Caco-2 (cell line): ENCODE measurements at regions of chr3 and their contacts with region 1.

Region 1: GRCh38 chr3:41198950-41199865 is at the start of gene CTNNB1:
- DNase-seq: peak; percentile 83 to 88
- H3K4me3 ChIP-seq: peak within 1 kb of the TSS; percentile 97
- H3K4me3 Mint-ChIP-seq: peak within 1 kb of the TSS; percentile 80
- H3K27ac Mint-ChIP-seq: peak within 1 kb of the TSS; percentile 94
- H3K4me1 ChIP-seq: peaks cover 27% of the 10 kb centered on the region
- H3K4me1 Mint-ChIP-seq: peaks cover 13% of the 10 kb centered on the region
- H3K27me3 ChIP-seq: no peaks in the 10 kb centered on the region
- H3K27me3 Mint-ChIP-seq: no peaks in the 10 kb centered on the region
- CTCF ChIP-seq: no peak
- total RNA-seq, gene CTNNB1: 201 and 206 TPM in 2 replicates

Region 2: GRCh38 chr3:40317061-40317855 is 882.0 kb before region 1 on chr3:
- CTCF ChIA-PET with region 1: no interaction called
- POLR2A ChIA-PET with region 1: no interaction called
- intact Hi-C with region 1: loop called (anchors 10 kb)
- DNase-seq: peak; percentile 40 to 57
- H3K4me3 ChIP-seq: no peak overlapping the region
- H3K4me3 Mint-ChIP-seq: no peak overlapping the region
- H3K27ac Mint-ChIP-seq: no peak overlapping the region
- H3K4me1 ChIP-seq: peaks cover 11% of the 10 kb centered on the region
- H3K4me1 Mint-ChIP-seq: peaks cover 9% of the 10 kb centered on the region
- H3K27me3 ChIP-seq: no peaks in the 10 kb centered on the region
- H3K27me3 Mint-ChIP-seq: peaks cover 2% of the 10 kb centered on the region
- CTCF ChIP-seq: peak; percentile 67 to 76

Region 3: DNA sequence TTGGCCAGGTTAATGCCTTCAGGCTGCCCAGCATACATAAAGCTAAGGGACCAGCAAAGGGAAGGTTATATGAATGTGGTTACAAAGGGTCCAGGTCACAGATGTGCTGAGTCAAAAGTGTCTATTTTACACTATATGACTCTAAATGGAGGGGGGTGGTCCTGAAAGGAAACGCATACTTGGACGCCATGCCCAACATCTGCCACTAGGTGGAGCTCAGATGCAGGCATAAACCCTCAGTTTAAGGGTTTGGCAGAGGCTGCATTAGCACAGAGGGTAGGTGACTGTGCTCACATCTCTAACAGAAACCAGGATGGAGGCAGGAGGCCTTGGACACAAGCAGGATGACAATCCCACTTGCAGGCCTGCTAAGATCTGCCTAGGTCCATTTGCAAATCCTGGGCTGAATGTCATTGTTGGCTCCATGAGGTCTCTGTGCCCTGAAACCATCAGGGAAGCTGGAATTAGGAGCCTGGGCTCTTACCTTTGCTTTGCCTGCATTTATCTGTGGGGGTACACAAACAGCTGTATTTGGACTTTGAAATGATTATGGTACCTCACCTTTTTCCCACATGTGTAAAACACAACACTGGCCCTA is 618.6 kb before region 1 on chr3:
- CTCF ChIA-PET with region 1: no interaction called
- POLR2A ChIA-PET with region 1: no interaction called
- intact Hi-C with region 1: loop called (anchors 5 kb)
- DNase-seq: peak; percentile 63 to 74
- H3K4me3 ChIP-seq: no peak overlapping the region
- H3K4me3 Mint-ChIP-seq: no peak overlapping the region
- H3K27ac Mint-ChIP-seq: no peak overlapping the region
- H3K4me1 ChIP-seq: no peaks in the 10 kb centered on the region
- H3K4me1 Mint-ChIP-seq: no peaks in the 10 kb centered on the region
- H3K27me3 ChIP-seq: no peaks in the 10 kb centered on the region
- H3K27me3 Mint-ChIP-seq: peaks cover 3% of the 10 kb centered on the region
- CTCF ChIP-seq: peak; percentile 91 to 94

Region 4: DNA sequence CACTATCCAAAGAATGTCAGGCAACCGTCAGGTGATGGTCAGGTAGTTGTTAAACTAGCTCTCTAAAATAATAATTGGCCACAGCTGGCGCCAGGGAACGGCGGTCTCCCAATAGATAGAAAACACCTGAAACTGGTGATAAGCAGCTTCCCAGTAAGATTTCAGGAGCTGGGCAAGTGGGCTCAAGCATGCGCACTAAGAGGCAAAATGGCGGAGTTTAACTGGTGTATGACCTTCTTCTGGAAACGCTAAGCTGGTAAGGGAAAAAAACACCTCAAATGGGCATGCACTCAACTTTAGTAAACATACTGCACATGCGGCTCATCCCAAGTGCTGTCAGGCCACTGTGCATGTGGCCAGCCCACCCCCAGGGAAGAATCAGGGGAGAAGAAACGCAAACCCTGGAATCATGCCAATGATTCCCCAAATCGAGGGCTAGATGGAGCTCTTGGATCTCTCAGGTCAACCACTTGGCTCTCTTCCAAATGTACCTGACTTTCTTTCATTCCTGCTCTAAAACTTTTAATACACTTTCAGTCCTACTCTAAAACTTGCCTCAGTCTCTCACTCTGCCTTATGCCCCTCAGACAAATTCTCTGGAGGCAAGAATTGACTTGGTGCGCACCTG is 479.4 kb before region 1 on chr3:
- CTCF ChIA-PET with region 1: no interaction called
- POLR2A ChIA-PET with region 1: no interaction called
- intact Hi-C with region 1: loop called (anchors 10 kb)
- DNase-seq: peak in 1 of 2 experiments; percentile 25
- H3K4me3 ChIP-seq: no peak overlapping the region
- H3K4me3 Mint-ChIP-seq: no peak overlapping the region
- H3K27ac Mint-ChIP-seq: no peak overlapping the region
- H3K4me1 ChIP-seq: peaks cover 8% of the 10 kb centered on the region; the same call in 1 of the 2 replicates
- H3K4me1 Mint-ChIP-seq: peaks cover 9% of the 10 kb centered on the region
- H3K27me3 ChIP-seq: no peaks in the 10 kb centered on the region
- H3K27me3 Mint-ChIP-seq: peaks cover 5% of the 10 kb centered on the region
- CTCF ChIP-seq: peak; percentile 21 to 37

Region 5: GRCh38 chr3:40847551-40847992 is 351.6 kb before region 1 on chr3:
- CTCF ChIA-PET with region 1: no interaction called
- POLR2A ChIA-PET with region 1: no interaction called
- intact Hi-C with region 1: loop called (anchors 10 kb)
- DNase-seq: peak; percentile 40 to 54
- H3K4me3 ChIP-seq: no peak overlapping the region
- H3K4me3 Mint-ChIP-seq: no peak overlapping the region
- H3K27ac Mint-ChIP-seq: no peak overlapping the region
- H3K4me1 ChIP-seq: 0 out of 2 replicates have a peak, but pooled peaks cover 7% of the 10 kb centered on the region
- H3K4me1 Mint-ChIP-seq: peaks cover 13% of the 10 kb centered on the region
- H3K27me3 ChIP-seq: no peaks in the 10 kb centered on the region
- H3K27me3 Mint-ChIP-seq: no peaks in the 10 kb centered on the region
- CTCF ChIP-seq: peak in 1 of 2 experiments; percentile 28

Region 6: GRCh38 chr3:41175365-41175764 is 23.8 kb before region 1 on chr3:
- CTCF ChIA-PET with region 1: no interaction called
- POLR2A ChIA-PET with region 1: interaction called, 13 read pairs
- intact Hi-C with region 1: no loop called
- DNase-seq: no peak
- H3K4me3 ChIP-seq: no peak overlapping the region
- H3K4me3 Mint-ChIP-seq: no peak overlapping the region
- H3K27ac Mint-ChIP-seq: no peak overlapping the region
- H3K4me1 ChIP-seq: peaks cover 43% of the 10 kb centered on the region
- H3K4me1 Mint-ChIP-seq: peaks cover 42% of the 10 kb centered on the region
- H3K27me3 ChIP-seq: no peaks in the 10 kb centered on the region
- H3K27me3 Mint-ChIP-seq: no peaks in the 10 kb centered on the region
- CTCF ChIP-seq: no peak

Region 7: DNA sequence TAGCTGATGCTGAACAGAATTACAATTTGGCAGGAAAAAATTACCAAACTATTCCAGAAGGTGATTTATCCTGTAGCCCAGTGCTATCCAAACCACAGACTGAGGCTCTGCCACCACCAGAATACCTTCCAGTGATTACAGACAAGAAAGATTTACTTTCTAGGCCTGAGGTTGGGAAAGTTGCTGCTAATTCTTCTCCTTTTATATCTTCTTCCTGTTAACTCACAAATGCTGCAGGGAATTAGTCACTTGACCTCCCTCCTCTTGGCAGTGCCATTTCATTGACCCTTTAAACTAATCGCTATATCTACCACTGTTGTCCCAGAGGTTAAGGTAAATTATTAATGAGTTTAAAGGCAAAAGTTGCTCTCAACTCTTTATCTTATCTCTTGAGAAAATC is 118.5 kb after region 1 on chr3:
- CTCF ChIA-PET with region 1: no interaction called
- POLR2A ChIA-PET with region 1: no interaction called
- intact Hi-C with region 1: loop called (anchors 5 kb)
- DNase-seq: peak; percentile 42 to 57
- H3K4me3 ChIP-seq: no peak overlapping the region
- H3K4me3 Mint-ChIP-seq: peak overlapping the region; percentile 6
- H3K27ac Mint-ChIP-seq: no peak overlapping the region
- H3K4me1 ChIP-seq: peaks cover 19% of the 10 kb centered on the region
- H3K4me1 Mint-ChIP-seq: no peaks in the 10 kb centered on the region
- H3K27me3 ChIP-seq: no peaks in the 10 kb centered on the region
- H3K27me3 Mint-ChIP-seq: no peaks in the 10 kb centered on the region
- CTCF ChIP-seq: no peak